ENCODE measurements at regions of chr9 and their contacts with region 1.

Region 1: DNA sequence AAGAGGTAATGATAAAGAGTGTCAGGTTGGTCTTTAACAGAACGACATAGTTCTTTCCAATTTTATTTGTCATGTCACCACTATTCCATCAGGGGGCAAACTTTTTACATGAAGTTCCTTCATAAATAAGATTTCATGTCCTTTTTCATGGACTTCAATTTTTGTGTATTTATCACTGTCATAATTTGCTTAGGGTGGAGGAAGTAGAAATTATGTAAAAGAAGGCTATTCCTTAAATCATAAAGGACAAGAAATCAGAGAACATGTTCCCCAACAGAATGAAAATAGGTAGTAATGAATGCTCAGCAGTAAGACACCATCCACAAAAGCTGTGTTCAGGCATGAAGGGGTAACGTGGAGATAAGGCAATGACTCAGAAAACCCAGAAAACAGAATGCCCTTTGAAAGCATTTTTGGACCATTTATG is 72.7 kb downstream of the ZFAND5 start:
- DNase-seq: no peak
- H3K4me3 ChIP-seq: no peak overlapping the region
- H3K4me3 Mint-ChIP-seq: no peak overlapping the region
- H3K27ac Mint-ChIP-seq: no peak overlapping the region
- H3K4me1 ChIP-seq: peaks cover 3% of the 10 kb centered on the region; the same call in 1 of the 2 replicates
- H3K4me1 Mint-ChIP-seq: peaks cover 4% of the 10 kb centered on the region
- H3K27me3 ChIP-seq: no peaks in the 10 kb centered on the region
- H3K27me3 Mint-ChIP-seq: no peaks in the 10 kb centered on the region
- CTCF ChIP-seq: no peak

Region 2: DNA sequence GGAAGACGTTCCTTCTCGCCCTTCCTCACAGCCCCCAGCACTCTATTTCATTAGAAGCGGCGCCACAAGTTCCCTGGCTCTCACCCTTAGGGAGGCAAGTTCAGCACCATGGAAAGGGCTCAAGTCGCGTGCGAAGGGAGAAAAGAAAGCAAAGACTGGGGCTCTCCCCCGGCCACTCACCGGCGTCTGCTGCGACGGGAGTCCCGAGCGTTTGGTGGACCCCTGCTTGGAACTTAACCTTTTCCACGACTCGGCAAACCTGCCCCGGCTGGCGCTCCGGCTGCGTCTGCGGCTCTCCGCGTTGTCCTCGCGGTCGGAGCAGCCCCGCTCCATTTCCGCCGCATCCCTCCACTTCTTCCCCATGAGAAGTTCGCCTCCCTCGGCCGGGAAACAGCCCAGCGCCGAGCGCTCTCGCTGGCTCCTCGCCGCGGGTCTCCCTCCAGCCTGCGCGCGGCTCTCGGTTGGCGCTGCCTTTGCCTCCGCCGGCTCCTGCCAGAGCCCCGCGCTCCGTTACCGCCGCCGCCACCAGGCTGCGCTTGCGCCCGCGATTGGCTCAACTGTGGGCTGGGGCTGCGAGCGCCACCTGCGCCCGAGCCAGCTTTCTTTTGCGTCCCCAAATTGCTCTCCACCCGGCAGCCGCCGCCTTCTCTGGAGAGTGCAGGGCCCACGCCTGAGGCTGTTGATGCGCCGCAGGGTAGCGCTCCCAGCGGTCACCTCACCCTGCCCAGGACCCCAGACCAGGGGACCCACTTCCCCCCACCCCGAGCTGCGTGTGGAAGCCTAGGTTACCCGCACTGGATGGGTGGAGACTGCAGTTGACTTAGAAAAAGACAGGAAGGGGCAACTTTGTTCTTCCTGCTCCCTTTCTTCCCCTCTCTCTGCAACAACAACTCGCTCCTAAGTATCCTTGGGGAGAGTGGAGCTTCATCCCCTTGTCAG is 845.5 kb before region 1 on chr9:
- CTCF ChIA-PET with region 1: no interaction called
- POLR2A ChIA-PET with region 1: no interaction called
- intact Hi-C with region 1: no loop called
- DNase-seq: peak; percentile 54
- H3K4me3 ChIP-seq: peak overlapping the region; percentile 21
- H3K4me3 Mint-ChIP-seq: peak overlapping the region; percentile 44
- H3K27ac Mint-ChIP-seq: no peak overlapping the region
- H3K4me1 ChIP-seq: no peaks in the 10 kb centered on the region
- H3K4me1 Mint-ChIP-seq: no peaks in the 10 kb centered on the region
- H3K27me3 ChIP-seq: no peaks in the 10 kb centered on the region
- H3K27me3 Mint-ChIP-seq: no peaks in the 10 kb centered on the region
- CTCF ChIP-seq: no peak

Region 3: GRCh38 chr9:72557549-72557948 is 265.3 kb after region 1 on chr9:
- CTCF ChIA-PET with region 1: no interaction called
- POLR2A ChIA-PET with region 1: no interaction called
- intact Hi-C with region 1: loop called (anchors 10 kb)
- DNase-seq: peak; percentile 17 to 61
- H3K4me3 ChIP-seq: no peak overlapping the region
- H3K4me3 Mint-ChIP-seq: no peak overlapping the region
- H3K27ac Mint-ChIP-seq: no peak overlapping the region
- H3K4me1 ChIP-seq: peaks cover 4% of the 10 kb centered on the region; the same call in 1 of the 2 replicates
- H3K4me1 Mint-ChIP-seq: no peaks in the 10 kb centered on the region
- H3K27me3 ChIP-seq: no peaks in the 10 kb centered on the region
- H3K27me3 Mint-ChIP-seq: no peaks in the 10 kb centered on the region
- CTCF ChIP-seq: no peak

Measured in Caco-2 (cell line).